GM12878 (cell line): ENCODE measurements at regions of chr1 and their contacts with region 1.

Region 1: GRCh38 chr1:147494998-147495580 is 46.2 kb upstream of the BCL9 start:
- DNase-seq: peak; percentile 13
- ATAC-seq: peak; percentile 99
- H3K4me3 ChIP-seq: no peak overlapping the region
- H3K27ac ChIP-seq: no peak overlapping the region
- H3K4me1 ChIP-seq: no peaks in the 10 kb centered on the region
- H3K27me3 ChIP-seq: no peaks in the 10 kb centered on the region
- CTCF ChIP-seq: peak; percentile 90 to 94 (median 93)
- EP300 ChIP-seq: no peak
- POLR2A ChIP-seq: no peak
- RAD21 ChIP-seq: peak; percentile 92

Region 2: DNA sequence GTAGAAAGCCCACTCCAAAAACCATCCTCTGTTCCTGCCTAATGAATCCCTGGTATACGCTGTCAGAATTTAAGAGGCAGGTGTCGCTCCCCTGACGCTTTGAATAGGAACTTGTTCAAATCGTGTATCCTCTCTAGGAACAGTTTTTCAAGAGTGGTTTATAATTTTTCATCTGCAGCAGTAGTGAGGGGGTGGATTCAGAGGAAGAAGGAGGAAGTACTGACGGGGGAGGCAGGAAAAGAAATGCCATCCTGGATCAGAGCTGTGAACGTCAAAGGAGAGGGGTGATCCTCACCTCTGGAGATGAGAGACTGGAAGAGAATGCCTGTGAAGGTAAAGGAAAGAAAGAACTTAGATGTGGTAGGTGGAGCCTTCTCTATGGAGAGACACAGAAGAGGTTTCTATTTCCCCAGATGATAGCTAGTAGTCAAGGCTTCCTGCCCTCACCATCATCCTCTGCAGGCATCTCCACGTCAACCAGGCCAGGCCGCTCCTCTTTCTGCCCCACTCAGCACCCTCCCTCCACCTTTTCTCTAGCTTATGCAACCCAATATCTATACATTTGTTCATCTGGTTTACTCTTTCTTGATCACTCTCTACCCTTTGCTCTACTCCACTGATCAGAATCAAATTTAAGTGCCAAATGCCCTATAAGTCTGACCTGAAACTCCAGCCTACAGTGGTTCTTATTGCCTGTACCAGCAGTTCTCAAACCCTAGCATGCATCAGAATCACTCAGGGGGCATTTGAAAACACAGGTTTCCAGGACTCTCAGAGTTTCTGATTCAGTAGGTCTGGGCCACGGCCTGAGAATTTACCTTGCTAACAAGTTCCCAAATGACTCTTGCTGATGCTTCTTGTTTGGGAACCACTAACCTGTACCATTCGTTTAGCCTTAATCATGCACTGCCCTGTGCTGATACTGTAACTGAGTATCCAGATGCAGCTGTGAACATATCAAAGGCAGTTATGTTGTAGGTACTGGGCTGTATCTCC is 33.1 kb after region 1 on chr1:
- CTCF ChIA-PET with region 1: no interaction called
- POLR2A ChIA-PET with region 1: no interaction called
- RAD21 ChIA-PET with region 1: no interaction called
- SMC1A ChIA-PET with region 1: no interaction called
- in situ Hi-C with region 1: no loop called
- intact Hi-C with region 1: no loop called
- DNase-seq: no peak
- ATAC-seq: no peak
- H3K4me3 ChIP-seq: no peak overlapping the region
- H3K27ac ChIP-seq: no peak overlapping the region
- H3K4me1 ChIP-seq: no peaks in the 10 kb centered on the region
- H3K27me3 ChIP-seq: peaks cover 0 to 1% of the 10 kb centered on the region in 2 experiments; a peak in 1 of 4 replicates
- CTCF ChIP-seq: no peak
- EP300 ChIP-seq: no peak
- POLR2A ChIP-seq: no peak
- RAD21 ChIP-seq: no peak

Region 3: DNA sequence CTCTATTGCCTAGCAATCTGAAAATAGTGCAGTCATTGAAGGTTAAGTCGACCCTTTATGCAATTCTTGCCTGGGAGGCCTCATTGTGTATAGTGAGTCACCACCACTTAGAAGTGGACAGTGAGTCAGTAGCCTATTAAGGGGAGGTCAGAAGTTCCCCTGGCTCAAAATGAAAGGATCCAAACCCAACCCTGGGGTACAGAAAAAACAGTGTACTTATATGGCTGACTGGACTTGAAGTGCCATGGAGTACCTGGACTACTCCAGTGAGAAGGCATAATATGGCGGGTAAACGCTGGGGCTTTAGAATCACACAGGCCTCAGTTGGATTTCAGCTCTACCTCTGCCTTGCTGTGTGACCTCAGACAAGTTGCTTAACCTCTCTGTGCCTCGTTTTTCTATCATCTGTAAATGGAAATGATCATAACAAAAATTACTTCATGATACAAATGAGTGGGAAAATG is 44.1 kb after region 1 on chr1:
- CTCF ChIA-PET with region 1: no interaction called
- POLR2A ChIA-PET with region 1: no interaction called
- RAD21 ChIA-PET with region 1: no interaction called
- SMC1A ChIA-PET with region 1: no interaction called
- in situ Hi-C with region 1: no loop called
- intact Hi-C with region 1: no loop called
- DNase-seq: no peak
- ATAC-seq: peak; percentile 32; the same call in 1 of the 3 replicates
- H3K4me3 ChIP-seq: no peak overlapping the region
- H3K27ac ChIP-seq: no peak overlapping the region
- H3K4me1 ChIP-seq: no peaks in the 10 kb centered on the region
- H3K27me3 ChIP-seq: no peaks in the 10 kb centered on the region
- CTCF ChIP-seq: no peak
- EP300 ChIP-seq: no peak
- POLR2A ChIP-seq: no peak
- RAD21 ChIP-seq: no peak

Region 4: GRCh38 chr1:147640553-147641165 is 145.6 kb after region 1 on chr1:
- CTCF ChIA-PET with region 1: interaction called, 12 read pairs
- POLR2A ChIA-PET with region 1: no interaction called
- RAD21 ChIA-PET with region 1: interaction called, 3 read pairs
- SMC1A ChIA-PET with region 1: interaction called, 4 read pairs
- in situ Hi-C with region 1: loop called (anchors 5 kb)
- intact Hi-C with region 1: loop called (anchors 1 kb)
- DNase-seq: no peak
- ATAC-seq: peak; percentile 100
- H3K4me3 ChIP-seq: no peak overlapping the region
- H3K27ac ChIP-seq: no peak overlapping the region
- H3K4me1 ChIP-seq: no peaks in the 10 kb centered on the region
- H3K27me3 ChIP-seq: no peaks in the 10 kb centered on the region
- CTCF ChIP-seq: peak; percentile 92 to 98 (median 92)
- EP300 ChIP-seq: no peak
- POLR2A ChIP-seq: no peak
- RAD21 ChIP-seq: peak; percentile 57

Region 5: DNA sequence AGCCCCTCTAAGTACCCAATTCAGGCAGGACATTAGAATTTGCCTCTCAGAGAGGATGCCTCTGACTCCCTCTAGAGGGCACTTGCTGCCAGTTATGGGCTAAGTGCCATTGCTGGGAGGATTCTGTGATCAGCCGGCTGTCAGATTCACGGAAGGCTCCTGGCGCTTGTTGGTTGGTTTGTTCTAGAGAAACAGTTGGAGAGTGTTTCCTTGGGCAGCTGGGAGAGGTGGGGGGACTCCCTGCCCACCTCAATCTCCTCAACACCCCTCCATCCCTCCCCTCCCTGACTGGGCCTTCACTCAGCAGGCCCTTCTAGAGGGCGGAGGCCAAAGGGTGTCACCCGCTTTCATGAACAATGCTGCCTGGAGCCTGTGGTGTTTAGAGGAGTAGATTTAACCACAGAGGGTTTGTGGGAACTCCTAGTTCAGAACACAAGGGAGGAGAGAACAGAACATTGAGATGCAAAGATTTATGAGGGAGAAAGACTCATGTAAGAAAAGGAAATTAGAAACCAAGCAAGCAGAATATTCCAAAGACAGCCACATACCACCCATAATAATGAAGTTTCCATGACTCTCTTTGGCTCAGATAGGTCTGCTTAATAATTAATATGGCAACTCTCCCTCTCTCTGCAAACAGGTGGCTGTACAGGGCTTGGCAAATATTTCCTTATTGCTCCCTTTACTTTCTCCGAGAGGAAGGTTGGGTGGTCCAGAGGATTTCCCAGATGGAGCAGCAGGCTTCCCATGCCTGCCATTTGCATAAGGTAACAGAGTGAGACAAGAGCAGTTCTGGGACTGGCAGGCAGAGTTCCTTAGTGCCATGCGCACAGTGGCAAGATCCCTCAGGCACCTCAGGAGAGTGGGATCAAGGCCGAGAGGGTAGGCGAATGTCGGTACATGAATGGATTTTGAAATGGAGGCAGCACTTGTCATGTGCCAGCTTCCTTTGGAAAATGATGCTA is 205.2 kb after region 1 on chr1:
- CTCF ChIA-PET with region 1: interaction called, 3 read pairs
- POLR2A ChIA-PET with region 1: no interaction called
- RAD21 ChIA-PET with region 1: no interaction called
- SMC1A ChIA-PET with region 1: no interaction called
- in situ Hi-C with region 1: no loop called
- intact Hi-C with region 1: loop called (anchors 10 kb)
- DNase-seq: no peak
- ATAC-seq: peak; percentile 90
- H3K4me3 ChIP-seq: no peak overlapping the region
- H3K27ac ChIP-seq: no peak overlapping the region
- H3K4me1 ChIP-seq: no peaks in the 10 kb centered on the region
- H3K27me3 ChIP-seq: no peaks in the 10 kb centered on the region; a peak in 1 of 4 replicates
- CTCF ChIP-seq: peak; percentile 78 to 88 (median 81)
- EP300 ChIP-seq: no peak
- POLR2A ChIP-seq: no peak
- RAD21 ChIP-seq: peak; percentile 64